PC-9 (cell line): ENCODE measurements at regions of chr2 and their contacts with region 1.

Region 1: GRCh38 chr2:218898109-218898878 is 17.6 kb downstream of the WNT10A start:
- DNase-seq: peak in 1 of 2 experiments; percentile 71
- H3K4me3 ChIP-seq: no peak overlapping the region
- H3K27ac ChIP-seq: no peak overlapping the region
- H3K4me1 ChIP-seq: peaks cover 49% of the 10 kb centered on the region
- H3K27me3 ChIP-seq: no peaks in the 10 kb centered on the region
- CTCF ChIP-seq: peak; percentile 96

Region 2: GRCh38 chr2:218733171-218734021 is 164.9 kb before region 1 on chr2:
- CTCF ChIA-PET with region 1: no interaction called
- POLR2A ChIA-PET with region 1: no interaction called
- intact Hi-C with region 1: loop called (anchors 5 kb)
- DNase-seq: peak in 1 of 2 experiments; percentile 56
- H3K4me3 ChIP-seq: no peak overlapping the region
- H3K27ac ChIP-seq: peak overlapping the region; percentile 66
- H3K4me1 ChIP-seq: peaks cover 43% of the 10 kb centered on the region
- H3K27me3 ChIP-seq: no peaks in the 10 kb centered on the region
- CTCF ChIP-seq: no peak

Region 3: DNA sequence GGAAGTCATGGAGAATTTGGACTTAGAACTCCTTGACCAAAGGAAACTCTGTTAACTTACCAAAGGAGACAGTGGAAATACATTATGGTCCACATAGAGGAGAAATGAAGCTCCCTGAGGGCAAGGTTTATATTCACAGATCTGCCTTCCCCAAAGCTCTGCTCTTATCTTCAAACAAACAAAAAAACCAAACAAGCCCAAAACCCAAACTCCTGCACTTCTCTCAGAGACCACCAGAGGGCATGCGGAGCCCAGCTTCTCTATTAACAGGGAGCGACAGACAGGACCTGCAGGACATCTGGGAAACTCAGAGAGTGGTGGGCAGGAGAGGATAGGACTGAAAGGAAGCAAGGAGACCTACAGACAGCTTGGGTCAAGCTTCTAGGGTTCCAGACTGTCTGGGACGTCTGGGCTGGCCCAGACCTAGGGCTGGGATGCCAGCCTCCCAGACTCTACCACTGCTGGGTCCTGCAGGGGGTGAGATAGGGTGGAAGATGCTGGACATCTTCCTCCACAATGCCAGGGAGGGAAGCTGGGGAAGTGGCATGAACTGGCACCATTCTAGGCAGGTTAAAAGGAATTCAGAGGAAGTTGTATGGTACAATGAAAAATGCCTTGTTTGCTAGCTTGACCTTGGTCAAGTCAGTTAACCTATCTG is 21.6 kb before region 1 on chr2:
- CTCF ChIA-PET with region 1: interaction called, 65 read pairs
- POLR2A ChIA-PET with region 1: interaction called, 7 read pairs
- intact Hi-C with region 1: loop called (anchors 1 kb)
- DNase-seq: peak in 1 of 2 experiments; percentile 77
- H3K4me3 ChIP-seq: no peak overlapping the region
- H3K27ac ChIP-seq: no peak overlapping the region
- H3K4me1 ChIP-seq: 0 out of 2 replicates have a peak, but pooled peaks cover 4% of the 10 kb centered on the region
- H3K27me3 ChIP-seq: no peaks in the 10 kb centered on the region
- CTCF ChIP-seq: peak; percentile 99

Region 4: GRCh38 chr2:218885981-218886947 is 12.0 kb before region 1 on chr2:
- CTCF ChIA-PET with region 1: interaction called, 10 read pairs
- POLR2A ChIA-PET with region 1: interaction called, 7 read pairs
- intact Hi-C with region 1: no loop called
- DNase-seq: no peak
- H3K4me3 ChIP-seq: no peak overlapping the region
- H3K27ac ChIP-seq: no peak overlapping the region
- H3K4me1 ChIP-seq: no peaks in the 10 kb centered on the region
- H3K27me3 ChIP-seq: no peaks in the 10 kb centered on the region
- CTCF ChIP-seq: no peak

Region 5: DNA sequence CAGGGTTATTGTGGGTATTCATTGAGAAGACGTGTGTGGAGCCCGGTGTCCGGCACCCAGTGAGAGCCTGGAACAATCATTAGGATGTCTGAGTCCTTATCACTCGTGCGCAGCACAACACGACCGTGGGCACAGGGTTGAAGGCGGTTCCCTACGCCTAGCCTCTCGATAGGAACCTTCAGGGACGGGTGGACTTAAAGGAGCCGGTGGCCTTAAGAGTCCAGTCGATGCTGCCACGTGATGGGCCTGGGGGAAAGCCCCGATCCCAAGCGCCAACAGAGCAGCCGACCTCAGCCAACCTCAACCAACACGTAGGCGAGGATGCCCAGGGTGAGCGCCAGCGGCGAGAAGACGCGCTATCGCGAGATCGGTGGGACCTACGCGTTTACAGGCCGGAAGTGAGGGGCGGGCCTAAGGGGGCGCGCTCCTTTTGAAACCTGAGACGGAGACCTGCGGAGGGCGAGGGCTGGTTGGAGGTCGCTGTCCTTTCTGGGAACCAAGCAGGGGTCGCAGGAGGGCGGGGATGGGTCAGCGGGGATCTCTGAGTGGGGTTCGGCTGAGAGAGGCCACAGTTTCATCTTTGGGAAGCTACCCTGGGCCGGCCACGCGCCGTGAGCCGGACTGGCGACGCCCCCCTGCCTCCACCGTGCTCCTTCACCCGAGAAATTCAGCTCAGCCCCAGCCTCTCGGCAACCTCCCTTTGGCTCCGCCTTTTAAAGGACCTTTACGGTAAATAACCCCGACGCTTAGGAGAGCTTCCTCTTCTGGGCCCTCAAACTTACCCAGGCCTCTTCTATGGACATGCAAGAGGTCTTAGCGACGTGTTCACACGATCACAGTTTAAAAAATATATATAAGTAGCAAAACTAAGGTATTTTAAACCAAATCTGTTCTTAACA is 10.7 kb after region 1 on chr2:
- CTCF ChIA-PET with region 1: interaction called, 15 read pairs
- POLR2A ChIA-PET with region 1: interaction called, 4 read pairs
- intact Hi-C with region 1: no loop called
- DNase-seq: peak; percentile 79 to 90
- H3K4me3 ChIP-seq: peak overlapping the region; percentile 67
- H3K27ac ChIP-seq: peak overlapping the region; percentile 59
- H3K4me1 ChIP-seq: peaks cover 15% of the 10 kb centered on the region
- H3K27me3 ChIP-seq: no peaks in the 10 kb centered on the region
- CTCF ChIP-seq: no peak